Activated CD4-positive, alpha-beta memory T cell treated with anti-CD3 and anti-CD28 coated beads for 36 hours (primary cell): ENCODE measurements at regions of chr11 and their contacts with region 1.

Region 1: GRCh38 chr11:62678770-62679696 is at the start of gene UBXN1:
- DNase-seq: peak; percentile 94
- H3K4me3 Mint-ChIP-seq: peak within 1 kb of the TSS; percentile 86
- H3K27ac Mint-ChIP-seq: peak within 1 kb of the TSS; percentile 90
- H3K4me1 Mint-ChIP-seq: peaks cover 35% of the 10 kb centered on the region
- H3K27me3 Mint-ChIP-seq: no peaks in the 10 kb centered on the region
- total RNA-seq, gene UBXN1: 110 to 116 TPM

Region 2: DNA sequence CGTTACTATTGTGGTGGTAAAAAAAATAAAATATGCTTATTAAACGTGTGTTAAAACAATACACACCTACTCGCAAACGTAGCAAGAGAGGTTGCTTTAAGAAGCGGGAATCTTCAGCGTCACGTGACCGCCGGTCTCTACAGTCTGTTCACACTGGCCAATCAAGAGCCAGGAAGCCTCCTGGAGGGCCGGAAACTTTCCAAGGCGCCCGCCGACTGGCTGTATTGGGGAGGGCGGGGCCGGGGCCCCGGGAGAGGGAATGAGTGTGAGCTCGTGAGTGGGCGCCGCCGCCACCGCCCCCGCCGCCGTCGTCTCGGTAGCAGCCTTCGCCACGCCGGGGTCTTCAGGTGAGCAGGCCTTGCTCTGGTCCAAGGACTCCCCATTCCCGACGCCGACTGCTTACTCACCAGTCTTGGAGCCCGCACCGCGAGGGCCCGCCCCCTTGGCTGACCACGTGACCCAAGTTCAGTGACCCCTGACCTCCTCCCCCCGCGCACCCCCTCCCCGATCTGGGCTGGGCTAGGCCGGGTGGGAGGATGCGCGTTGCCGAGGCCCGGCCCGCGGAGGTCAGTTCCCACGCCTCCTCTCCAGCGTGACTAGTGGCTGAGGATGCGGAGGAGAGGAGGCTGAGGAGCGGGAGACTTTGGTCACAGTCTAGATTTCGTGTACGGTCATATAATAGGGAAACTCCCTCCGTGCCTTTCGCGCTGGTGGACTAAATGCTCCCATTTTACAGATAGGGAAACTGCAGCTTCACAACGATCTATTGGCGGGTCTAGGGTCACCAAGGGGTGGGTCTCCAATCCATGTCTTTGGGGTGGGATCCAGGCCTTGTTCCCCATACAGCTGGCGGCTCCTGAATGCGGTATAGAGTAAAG is 92.3 kb after region 1 on chr11 and contains the start of gene TAF6L:
- CTCF ChIA-PET with region 1: interaction called, 3 read pairs
- POLR2A ChIA-PET with region 1: interaction called, 3 read pairs
- intact Hi-C with region 1: loop called (anchors 1 kb)
- DNase-seq: peak; percentile 98
- H3K4me3 Mint-ChIP-seq: peak within 1 kb of the TSS; percentile 79
- H3K27ac Mint-ChIP-seq: peak within 1 kb of the TSS; percentile 94
- H3K4me1 Mint-ChIP-seq: peaks cover 24% of the 10 kb centered on the region
- H3K27me3 Mint-ChIP-seq: no peaks in the 10 kb centered on the region
- total RNA-seq, gene TAF6L: 11.9 to 12.0 TPM

Region 3: DNA sequence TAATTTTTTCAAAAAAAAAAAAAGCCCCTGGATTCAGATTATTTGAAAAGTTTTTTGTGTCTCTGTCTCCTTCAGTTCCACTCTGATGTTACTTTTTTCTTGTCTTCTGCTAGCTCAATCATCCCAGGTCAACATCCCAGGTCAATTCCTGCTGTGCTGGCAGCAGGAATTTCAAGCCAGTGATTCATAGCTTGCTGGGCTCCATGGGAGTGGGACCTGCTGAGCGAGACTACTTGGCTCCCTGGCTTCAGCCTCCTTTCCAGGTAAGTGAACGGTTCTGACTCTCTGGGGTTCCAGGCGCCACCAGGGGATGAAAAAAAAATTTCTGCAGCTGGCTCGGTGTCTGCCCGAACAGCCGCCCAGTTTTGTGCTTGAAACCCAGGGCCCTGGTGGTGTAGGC is 780.6 kb after region 1 on chr11:
- CTCF ChIA-PET with region 1: no interaction called
- POLR2A ChIA-PET with region 1: no interaction called
- intact Hi-C with region 1: no loop called
- DNase-seq: no peak
- H3K4me3 Mint-ChIP-seq: no peak overlapping the region
- H3K27ac Mint-ChIP-seq: no peak overlapping the region
- H3K4me1 Mint-ChIP-seq: no peaks in the 10 kb centered on the region
- H3K27me3 Mint-ChIP-seq: peaks cover 8% of the 10 kb centered on the region